ENCODE measurements at regions of chr10 and their contacts with region 1.

Region 1: GRCh38 chr10:67884313-67884841 is at the start of gene SIRT1:
- DNase-seq: peak; percentile 99
- ATAC-seq: peak; percentile 97
- total RNA-seq, gene SIRT1: 10.9 TPM

Region 2: DNA sequence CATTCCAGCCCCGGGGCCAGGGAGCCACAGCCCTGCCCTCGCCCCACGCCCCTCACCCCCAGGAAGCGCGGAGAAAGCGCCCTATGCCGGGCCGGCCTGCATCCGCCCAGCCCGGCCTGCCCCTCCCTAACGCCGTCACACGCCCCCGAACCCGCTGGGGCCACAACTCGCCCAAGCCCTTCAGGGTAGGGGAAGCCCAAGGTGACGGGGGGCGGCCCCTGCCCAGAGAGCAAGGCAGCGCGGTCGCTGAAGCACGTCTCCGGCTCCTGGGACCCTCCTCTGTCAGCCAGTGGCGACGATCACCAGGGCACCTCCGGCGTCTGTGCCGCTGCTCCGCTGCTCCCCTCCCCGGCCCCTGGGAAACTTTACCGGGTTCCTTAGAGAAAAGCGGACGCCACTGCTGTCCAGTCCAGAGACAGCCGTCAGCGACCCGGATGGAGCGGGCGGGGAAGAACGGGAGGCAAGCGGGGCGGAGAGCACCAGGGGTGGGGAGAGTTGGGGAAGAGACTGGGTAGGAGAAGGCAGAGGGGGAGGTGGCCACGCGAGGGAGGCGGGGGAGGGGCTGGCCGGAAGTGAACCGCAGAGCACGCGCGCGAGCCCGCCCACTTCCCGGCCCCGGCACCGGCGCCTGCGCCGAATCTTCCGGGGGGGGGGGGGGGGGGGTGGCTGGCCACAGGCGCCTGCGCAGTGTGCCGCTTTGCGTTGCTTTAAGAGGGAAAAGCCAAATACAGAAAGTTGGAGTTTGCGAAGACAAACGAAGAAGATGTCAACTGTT is 190.6 kb after region 1 on chr10 and contains the start of gene HERC4:
- intact Hi-C with region 1: loop called (anchors 10 kb)
- DNase-seq: peak; percentile 96
- ATAC-seq: peak; percentile 100
- total RNA-seq, gene HERC4: 25.5 TPM